MCF 10A (cell line): ENCODE measurements at regions of chr10 and their contacts with region 1.

Region 1: GRCh38 chr10:21099291-21100062 is 202.4 kb upstream of the NEBL start:
- DNase-seq: no peak
- H3K4me3 Mint-ChIP-seq: no peak overlapping the region
- H3K27ac Mint-ChIP-seq: peak overlapping the region; percentile 95
- H3K4me1 Mint-ChIP-seq: peaks cover 42% of the 10 kb centered on the region
- H3K27me3 Mint-ChIP-seq: no peaks in the 10 kb centered on the region
- CTCF ChIP-seq: no peak

Region 2: GRCh38 chr10:21083871-21084295 is 15.6 kb before region 1 on chr10:
- CTCF ChIA-PET with region 1: interaction called, 9 read pairs
- POLR2A ChIA-PET with region 1: interaction called, 10 read pairs
- intact Hi-C with region 1: no loop called
- DNase-seq: peak; percentile 64
- H3K4me3 Mint-ChIP-seq: no peak overlapping the region
- H3K27ac Mint-ChIP-seq: no peak overlapping the region
- H3K4me1 Mint-ChIP-seq: peaks cover 19% of the 10 kb centered on the region
- H3K27me3 Mint-ChIP-seq: no peaks in the 10 kb centered on the region
- CTCF ChIP-seq: no peak

Region 3: GRCh38 chr10:21194464-21194993 is 95.1 kb after region 1 on chr10:
- CTCF ChIA-PET with region 1: no interaction called
- POLR2A ChIA-PET with region 1: interaction called, 13 read pairs
- intact Hi-C with region 1: loop called (anchors 1 kb)
- DNase-seq: peak; percentile 86
- H3K4me3 Mint-ChIP-seq: peak overlapping the region; percentile 13
- H3K27ac Mint-ChIP-seq: peak overlapping the region; percentile 43
- H3K4me1 Mint-ChIP-seq: peaks cover 29% of the 10 kb centered on the region
- H3K27me3 Mint-ChIP-seq: no peaks in the 10 kb centered on the region
- CTCF ChIP-seq: no peak

Region 4: GRCh38 chr10:21273400-21273932 is 174.0 kb after region 1 on chr10:
- CTCF ChIA-PET with region 1: interaction called, 4 read pairs
- POLR2A ChIA-PET with region 1: no interaction called
- intact Hi-C with region 1: loop called (anchors 5 kb)
- DNase-seq: no peak
- H3K4me3 Mint-ChIP-seq: no peak overlapping the region
- H3K27ac Mint-ChIP-seq: no peak overlapping the region
- H3K4me1 Mint-ChIP-seq: peaks cover 11% of the 10 kb centered on the region
- H3K27me3 Mint-ChIP-seq: no peaks in the 10 kb centered on the region
- CTCF ChIP-seq: no peak